Kidney (tissue), 22 donors: ENCODE measurements at regions of chr1 and their contacts with region 1.

Region 1: GRCh38 chr1:200802865-200803512 is 64.3 kb downstream of the CAMSAP2 start:
- DNase-seq: peak; percentile 78 to 92 (median 87)
- H3K4me3 ChIP-seq: no peak overlapping the region
- H3K27ac ChIP-seq: no peak overlapping the region
- H3K4me1 ChIP-seq: peaks cover 0 to 2% (median 0%) of the 10 kb centered on the region in 3 donors
- H3K27me3 ChIP-seq: no peaks in the 10 kb centered on the region
- CTCF ChIP-seq: peak; percentile 97

Region 2: DNA sequence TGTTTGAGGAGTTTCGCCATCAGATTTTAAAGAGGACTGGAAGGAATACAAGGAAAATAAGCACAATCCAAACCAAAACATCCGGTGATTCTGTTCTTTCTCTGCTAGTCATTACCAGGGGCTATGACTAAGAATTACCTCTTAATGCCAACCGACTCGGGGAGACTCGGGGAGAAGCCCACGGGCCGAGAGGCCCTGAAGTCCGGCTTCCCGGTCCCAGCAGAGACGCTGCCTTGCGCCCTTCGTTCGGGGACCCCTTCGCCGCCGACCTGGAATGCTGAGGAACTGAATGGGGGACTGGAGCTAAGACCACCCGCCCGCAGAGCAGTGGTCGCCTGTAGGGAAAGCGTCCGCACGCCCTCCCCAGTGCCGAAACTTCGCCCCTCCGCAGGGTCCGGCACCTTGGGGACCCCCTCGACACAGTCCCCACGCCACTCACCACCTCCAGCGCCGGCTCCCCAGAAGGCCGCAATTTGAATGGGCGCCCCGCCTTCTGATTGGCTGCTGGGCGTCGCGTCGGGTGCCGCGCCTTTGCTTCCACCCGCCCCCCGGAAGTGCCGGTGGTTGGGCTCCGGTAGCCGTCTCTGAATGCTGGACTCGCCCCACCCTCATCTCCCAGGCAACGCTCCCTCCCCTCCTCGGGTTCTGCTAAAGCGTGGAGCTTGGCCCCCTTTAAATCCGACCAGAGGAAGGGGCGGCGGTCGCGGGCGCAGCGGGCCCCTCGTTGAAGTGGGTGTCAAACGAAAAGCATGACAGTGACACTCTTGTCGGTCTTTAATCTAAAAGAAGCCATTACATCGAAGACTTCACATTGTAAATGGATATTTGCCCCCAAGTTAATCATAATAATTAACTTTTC is 182.5 kb before region 1 on chr1 and contains the start of gene KIF14:
- intact Hi-C with region 1: loop called (anchors 10 kb)
- DNase-seq: peak; percentile 95 to 98 (median 95)
- H3K4me3 ChIP-seq: peak within 1 kb of the TSS; percentile 85 to 91 (median 86)
- H3K27ac ChIP-seq: no peak within 1 kb of the TSS
- H3K4me1 ChIP-seq: peaks cover 0 to 3% (median 0%) of the 10 kb centered on the region in 3 donors
- H3K27me3 ChIP-seq: no peaks in the 10 kb centered on the region
- CTCF ChIP-seq: no peak
- total RNA-seq, gene KIF14: 0.19 TPM

Region 3: GRCh38 chr1:200708769-200709168 is 94.2 kb before region 1 on chr1:
- intact Hi-C with region 1: no loop called
- DNase-seq: no peak
- H3K4me3 ChIP-seq: no peak overlapping the region
- H3K27ac ChIP-seq: no peak overlapping the region
- H3K4me1 ChIP-seq: no peaks in the 10 kb centered on the region
- H3K27me3 ChIP-seq: no peaks in the 10 kb centered on the region
- CTCF ChIP-seq: no peak